ENCODE measurements at regions of chr3 and their contacts with region 1.

Region 1: GRCh38 chr3:107951126-107951525 is 139.7 kb downstream of the CD47 start:
- DNase-seq: no peak
- CTCF ChIP-seq: no peak

Region 2: GRCh38 chr3:107938143-107938542 is 13.0 kb before region 1 on chr3:
- CTCF ChIA-PET with region 1: interaction called, 13 read pairs
- POLR2A ChIA-PET with region 1: no interaction called
- DNase-seq: no peak
- CTCF ChIP-seq: peak; percentile 40

Measured in GM10248 (cell line).